ENCODE measurements at regions of chr22 and their contacts with region 1.

Region 1: DNA sequence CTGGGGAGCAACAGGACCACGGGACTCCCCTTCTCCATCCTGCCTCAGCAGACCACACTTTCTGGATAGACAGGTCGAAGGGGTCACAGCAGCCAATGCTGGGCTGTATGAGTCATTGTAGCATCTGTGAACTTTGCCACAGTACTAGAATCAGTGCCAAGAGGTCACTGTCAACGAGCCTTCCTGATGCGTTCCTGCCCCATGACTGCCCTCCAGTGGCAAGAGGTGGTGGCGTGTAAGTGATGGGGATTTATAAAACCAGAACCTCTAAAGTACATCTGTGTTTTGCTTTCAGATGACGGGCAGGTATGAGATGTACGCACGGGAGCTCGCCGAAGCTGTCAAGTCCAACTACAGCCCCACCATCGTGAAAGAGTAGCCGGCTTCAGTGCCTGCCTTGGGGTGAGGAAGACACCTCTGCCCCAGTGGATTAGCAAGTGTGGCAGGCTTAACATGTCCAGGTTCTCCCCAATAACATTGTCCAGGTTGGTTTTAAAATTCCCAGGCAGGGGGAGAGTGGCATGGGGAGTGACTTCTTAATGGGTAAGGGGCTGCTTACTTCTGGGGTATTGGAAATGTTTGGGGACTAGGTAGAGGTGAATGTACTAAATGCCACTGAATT is 29.4 kb downstream of the GUCD1 start:
- DNase-seq: peak; percentile 44 to 69
- ATAC-seq: peak; percentile 59 to 87
- H3K4me3 ChIP-seq: no peak overlapping the region
- H3K27ac ChIP-seq: no peak overlapping the region
- H3K4me1 ChIP-seq: peaks cover 4 to 7% of the 10 kb centered on the region in 2 donors
- H3K27me3 ChIP-seq: no peaks in the 10 kb centered on the region
- CTCF ChIP-seq: peak; percentile 68 to 81 (median 75)
- POLR2A ChIP-seq: no peak

Region 2: GRCh38 chr22:24247011-24247507 is 278.5 kb before region 1 on chr22:
- in situ Hi-C with region 1: no loop called
- intact Hi-C with region 1: no loop called
- DNase-seq: no peak
- ATAC-seq: peak in 1 of 2 donors; percentile 16
- H3K4me3 ChIP-seq: no peak overlapping the region
- H3K27ac ChIP-seq: peak overlapping the region; percentile 73 to 82 (median 77)
- H3K4me1 ChIP-seq: peaks cover 14 to 20% of the 10 kb centered on the region in 2 donors
- H3K27me3 ChIP-seq: no peaks in the 10 kb centered on the region
- CTCF ChIP-seq: no peak
- POLR2A ChIP-seq: no peak

Region 3: DNA sequence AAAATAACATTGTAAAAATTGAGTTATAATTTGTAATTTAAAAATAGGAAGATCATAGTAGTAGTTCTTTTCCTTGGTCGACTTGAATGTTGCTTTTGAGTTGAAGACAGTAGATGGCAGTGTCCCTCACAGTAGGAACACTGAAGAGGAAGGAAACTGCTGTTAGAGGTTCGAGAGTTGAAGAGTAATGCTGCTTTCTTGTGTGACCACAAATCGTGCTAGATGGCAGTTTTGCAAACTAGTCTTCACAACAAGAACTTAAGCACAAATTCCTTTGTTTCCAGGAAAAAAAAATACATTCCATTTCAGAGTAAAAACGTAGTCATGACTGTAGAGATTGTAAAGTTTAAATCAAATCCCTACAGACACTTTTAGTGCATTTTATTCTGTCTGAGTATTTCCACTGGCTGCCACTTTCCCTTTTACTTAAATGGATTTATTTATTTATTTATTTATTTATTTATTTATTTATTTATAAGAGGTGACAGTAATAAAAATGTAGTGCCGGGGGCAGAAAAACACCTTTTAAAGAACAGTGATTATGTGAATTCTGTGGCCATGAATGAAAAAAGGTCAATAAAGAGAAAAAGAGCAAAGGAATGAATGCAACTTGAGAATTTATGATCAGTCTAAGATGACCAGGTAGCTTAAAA is 200.3 kb before region 1 on chr22:
- in situ Hi-C with region 1: loop called (anchors 5 to 10 kb)
- intact Hi-C with region 1: loop called (anchors 10 kb)
- DNase-seq: no peak
- ATAC-seq: peak; percentile 66 to 79
- H3K4me3 ChIP-seq: no peak overlapping the region
- H3K27ac ChIP-seq: no peak overlapping the region
- H3K4me1 ChIP-seq: no peaks in the 10 kb centered on the region
- H3K27me3 ChIP-seq: no peaks in the 10 kb centered on the region
- CTCF ChIP-seq: peak; percentile 26 to 66 (median 47)
- POLR2A ChIP-seq: no peak

Region 4: GRCh38 chr22:24417901-24418641 is 107.5 kb before region 1 on chr22:
- in situ Hi-C with region 1: loop called in 2 of 4 experiments (anchors 5 to 10 kb)
- intact Hi-C with region 1: loop called (anchors 2 kb)
- DNase-seq: no peak
- ATAC-seq: no peak
- H3K4me3 ChIP-seq: no peak overlapping the region
- H3K27ac ChIP-seq: no peak overlapping the region
- H3K4me1 ChIP-seq: peaks cover 11 to 13% of the 10 kb centered on the region in 2 donors
- H3K27me3 ChIP-seq: no peaks in the 10 kb centered on the region
- CTCF ChIP-seq: no peak
- POLR2A ChIP-seq: no peak

Region 5: DNA sequence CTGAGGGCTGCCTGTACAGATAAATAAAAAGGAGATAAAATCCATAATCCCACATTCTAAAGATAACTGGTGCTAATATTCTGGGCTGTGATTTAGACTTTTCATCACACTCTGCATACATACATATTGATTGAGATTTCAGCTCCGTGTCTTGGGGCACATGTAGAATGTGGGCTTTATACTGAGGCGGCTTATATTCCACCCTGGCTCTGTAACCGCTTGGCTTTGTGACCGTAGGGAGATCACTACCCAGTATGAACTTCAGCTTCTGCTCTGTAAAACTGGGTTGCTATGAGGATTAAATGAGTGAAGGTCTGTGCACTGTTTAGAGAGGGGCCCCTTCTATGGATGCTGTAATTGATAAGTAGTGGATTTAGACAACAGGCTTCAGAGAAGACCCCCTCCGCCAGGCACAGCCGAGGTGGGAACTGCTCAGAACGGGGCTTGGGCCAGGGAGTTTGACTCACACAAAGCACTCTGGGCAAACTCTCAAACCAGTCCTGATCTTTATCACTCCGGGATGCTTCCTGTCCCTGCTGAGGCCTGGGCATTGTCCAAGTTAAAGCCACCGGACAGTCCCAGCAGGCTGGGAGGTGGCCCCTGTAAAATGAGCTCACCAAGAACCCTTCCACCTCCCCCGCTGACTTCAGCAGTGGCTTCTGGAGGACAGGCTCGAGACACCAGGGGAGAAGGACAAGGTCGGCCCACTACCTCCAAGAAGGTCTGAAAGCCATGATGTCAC is 444.2 kb after region 1 on chr22:
- in situ Hi-C with region 1: no loop called
- intact Hi-C with region 1: no loop called
- DNase-seq: peak; percentile 14 to 46
- ATAC-seq: peak; percentile 67 to 73
- H3K4me3 ChIP-seq: no peak overlapping the region
- H3K27ac ChIP-seq: peak overlapping the region; percentile 43 to 79 (median 68)
- H3K4me1 ChIP-seq: peaks cover 10 to 45% of the 10 kb centered on the region in 2 donors
- H3K27me3 ChIP-seq: no peaks in the 10 kb centered on the region
- CTCF ChIP-seq: no peak
- POLR2A ChIP-seq: no peak